ENCODE measurements at regions of chr20 and their contacts with region 1.

Region 1: DNA sequence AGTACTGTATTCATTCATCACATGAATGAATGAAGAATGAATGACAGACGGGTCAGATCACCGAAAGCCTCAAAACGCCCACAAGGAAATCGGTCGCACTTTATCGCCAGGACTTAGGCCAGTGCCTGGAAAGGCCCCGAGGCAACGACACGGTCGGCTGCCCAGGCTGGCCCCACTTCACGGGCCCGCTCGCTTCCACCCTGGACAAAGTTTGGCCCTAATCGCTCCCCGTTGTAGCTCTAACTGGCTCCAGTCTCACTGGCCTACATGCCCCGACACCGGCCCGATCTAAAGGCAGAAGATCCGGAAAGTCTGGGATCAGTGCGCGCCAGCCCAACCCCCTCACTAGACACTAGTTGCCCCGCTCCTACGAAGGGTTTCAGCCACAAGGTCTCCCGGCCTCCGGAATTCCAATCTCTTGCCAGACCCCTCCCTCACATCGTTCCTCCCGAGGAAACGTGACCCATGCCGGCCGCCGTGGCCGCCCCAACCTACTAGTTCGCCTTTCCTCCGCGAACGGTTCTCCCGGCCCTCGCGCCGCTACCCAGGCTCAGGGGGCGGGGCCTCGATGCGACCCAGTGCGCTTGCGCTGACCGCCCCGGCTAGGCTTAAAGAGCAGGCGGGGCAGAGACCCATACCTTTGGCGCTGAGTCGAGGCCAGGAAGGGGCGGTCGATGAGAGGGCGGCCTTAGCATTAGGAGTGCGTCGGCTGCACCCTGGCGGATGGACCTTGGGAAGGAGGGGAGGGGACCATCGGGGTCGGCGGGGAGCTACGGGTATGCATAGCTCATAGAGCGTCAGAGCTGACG is at the starts of genes GSS and MYH7B:
- DNase-seq: peak; percentile 98
- ATAC-seq: peak; percentile 94
- H3K4me3 ChIP-seq: peak within 1 kb of the TSS; percentile 76
- H3K27ac ChIP-seq: peak within 1 kb of the TSS; percentile 67
- H3K4me1 ChIP-seq: peaks cover 17% of the 10 kb centered on the region
- H3K27me3 ChIP-seq: no peaks in the 10 kb centered on the region
- CTCF ChIP-seq: peak; percentile 79
- total RNA-seq, gene GSS: 82.0 and 95.9 TPM in 2 replicates
- total RNA-seq, gene MYH7B: 0.04 TPM in 1 of 2 replicates, not detected in the other

Region 2: DNA sequence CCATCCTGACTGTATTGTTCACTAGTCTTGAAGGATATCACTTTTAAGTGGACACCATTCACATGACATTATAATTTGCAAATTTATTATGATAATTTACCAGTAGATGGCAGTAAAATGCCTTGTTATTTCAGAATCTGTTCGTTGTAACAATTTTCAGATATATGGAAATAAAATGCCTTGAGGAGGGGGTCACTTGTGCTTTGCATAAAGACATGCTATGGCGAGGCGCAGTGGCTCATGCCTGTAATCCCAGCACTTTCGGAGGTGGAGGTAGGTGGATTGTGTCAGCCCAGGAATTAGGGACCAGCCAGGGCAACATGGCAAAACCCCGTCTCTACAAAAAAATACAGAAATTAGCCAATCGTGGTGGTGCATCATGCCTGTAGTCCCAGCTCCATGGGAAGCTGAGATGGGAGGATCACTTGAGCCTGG is 121.0 kb before region 1 on chr20:
- CTCF ChIA-PET with region 1: no interaction called
- POLR2A ChIA-PET with region 1: no interaction called
- intact Hi-C with region 1: loop called (anchors 2 kb)
- DNase-seq: peak; percentile 86
- ATAC-seq: peak; percentile 84
- H3K4me3 ChIP-seq: peak overlapping the region; percentile 62
- H3K27ac ChIP-seq: no peak overlapping the region
- H3K4me1 ChIP-seq: no peaks in the 10 kb centered on the region
- H3K27me3 ChIP-seq: peaks cover 13% of the 10 kb centered on the region; the same call in 1 of the 2 replicates
- CTCF ChIP-seq: peak; percentile 72

Region 3: GRCh38 chr20:34891166-34892062 is 64.0 kb before region 1 on chr20:
- CTCF ChIA-PET with region 1: interaction called, 15 read pairs
- POLR2A ChIA-PET with region 1: no interaction called
- intact Hi-C with region 1: no loop called
- DNase-seq: peak; percentile 88
- ATAC-seq: peak; percentile 94
- H3K4me3 ChIP-seq: no peak overlapping the region
- H3K27ac ChIP-seq: peak overlapping the region; percentile 64
- H3K4me1 ChIP-seq: peaks cover 24% of the 10 kb centered on the region
- H3K27me3 ChIP-seq: no peaks in the 10 kb centered on the region
- CTCF ChIP-seq: no peak

Region 4: DNA sequence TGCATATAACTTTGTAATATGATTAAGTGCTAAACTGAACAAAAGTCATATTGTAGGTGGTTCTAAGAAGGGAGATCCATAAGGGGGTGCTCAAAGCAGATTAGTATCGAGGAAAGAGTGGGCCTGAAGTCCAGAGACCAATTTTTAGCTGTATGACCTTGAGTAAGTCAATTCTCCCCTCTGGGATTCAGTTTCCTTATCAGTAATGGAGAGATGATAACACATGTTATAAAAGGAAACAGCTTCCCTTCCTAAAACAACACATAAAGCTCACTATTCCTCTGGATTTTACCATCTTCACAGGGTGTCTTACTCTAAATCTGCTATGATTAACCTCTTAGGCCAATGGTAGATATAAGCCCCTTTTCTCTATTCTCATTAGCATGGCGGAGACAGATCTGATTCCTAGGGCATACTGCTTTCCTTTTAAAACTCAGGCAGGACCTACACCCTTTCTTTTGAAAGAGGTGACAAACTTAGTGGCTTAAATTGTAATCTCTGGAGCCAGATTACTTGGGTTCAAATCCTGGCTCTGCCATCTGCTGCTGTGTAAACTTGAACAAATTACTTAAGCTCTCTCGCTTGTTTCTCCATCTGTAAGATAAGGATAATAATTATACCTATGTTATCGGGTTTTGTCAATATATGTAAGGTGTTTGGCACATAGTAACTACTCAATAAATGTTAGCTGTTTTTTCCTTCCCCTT is 39.5 kb before region 1 on chr20:
- CTCF ChIA-PET with region 1: no interaction called
- POLR2A ChIA-PET with region 1: no interaction called
- intact Hi-C with region 1: no loop called
- DNase-seq: no peak
- ATAC-seq: no peak
- H3K4me3 ChIP-seq: no peak overlapping the region
- H3K27ac ChIP-seq: no peak overlapping the region
- H3K4me1 ChIP-seq: peaks cover 12% of the 10 kb centered on the region
- H3K27me3 ChIP-seq: no peaks in the 10 kb centered on the region
- CTCF ChIP-seq: no peak

Region 5: DNA sequence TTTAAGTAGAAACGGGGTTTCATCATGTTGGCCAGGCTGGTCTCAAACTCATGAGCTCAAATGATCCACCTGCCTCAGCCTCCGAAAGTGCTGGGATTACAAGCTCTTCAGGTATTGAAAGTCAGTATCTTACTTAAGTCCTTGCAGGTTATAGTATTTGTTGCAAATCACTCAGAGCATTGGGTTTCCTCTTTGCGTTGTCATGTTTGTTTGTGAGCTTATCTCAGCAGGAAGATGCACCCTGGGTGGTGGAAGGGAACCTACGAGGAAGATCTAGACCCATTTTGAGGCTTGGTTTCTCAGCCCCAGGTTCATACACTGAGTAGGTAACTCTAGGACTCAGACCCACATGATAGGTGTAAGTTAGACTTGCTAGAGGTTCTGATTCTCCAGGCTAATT is 18.8 kb after region 1 on chr20:
- CTCF ChIA-PET with region 1: interaction called, 6 read pairs
- POLR2A ChIA-PET with region 1: interaction called, 36 read pairs
- intact Hi-C with region 1: no loop called
- DNase-seq: no peak
- ATAC-seq: no peak
- H3K4me3 ChIP-seq: no peak overlapping the region
- H3K27ac ChIP-seq: no peak overlapping the region
- H3K4me1 ChIP-seq: no peaks in the 10 kb centered on the region
- H3K27me3 ChIP-seq: no peaks in the 10 kb centered on the region
- CTCF ChIP-seq: no peak

Region 6: GRCh38 chr20:35263532-35264223 is 308.2 kb after region 1 on chr20:
- CTCF ChIA-PET with region 1: interaction called, 20 read pairs
- POLR2A ChIA-PET with region 1: no interaction called
- intact Hi-C with region 1: no loop called
- DNase-seq: peak; percentile 49
- ATAC-seq: peak; percentile 61
- H3K4me3 ChIP-seq: peak overlapping the region; percentile 26; the same call in 1 of the 2 replicates
- H3K27ac ChIP-seq: peak overlapping the region; percentile 32
- H3K4me1 ChIP-seq: peaks cover 19% of the 10 kb centered on the region
- H3K27me3 ChIP-seq: no peaks in the 10 kb centered on the region
- CTCF ChIP-seq: no peak